Kidney (tissue), 22 donors: ENCODE measurements at regions of chr20 and their contacts with region 1.

Region 1: GRCh38 chr20:51372176-51372803 is 170.2 kb downstream of the NFATC2 start:
- DNase-seq: peak in 4 of 5 donors; percentile 78 to 84 (median 80)
- H3K4me3 ChIP-seq: no peak overlapping the region
- H3K27ac ChIP-seq: no peak overlapping the region
- H3K4me1 ChIP-seq: no peaks in the 10 kb centered on the region
- H3K27me3 ChIP-seq: no peaks in the 10 kb centered on the region
- CTCF ChIP-seq: peak; percentile 60

Region 2: GRCh38 chr20:51595058-51595532 is 222.8 kb after region 1 on chr20:
- intact Hi-C with region 1: loop called (anchors 10 kb)
- DNase-seq: peak; percentile 84 to 94 (median 89)
- H3K4me3 ChIP-seq: no peak overlapping the region
- H3K27ac ChIP-seq: peak overlapping the region in 1 of 2 donors; percentile 5
- H3K4me1 ChIP-seq: peaks cover 0 to 7% (median 0%) of the 10 kb centered on the region in 3 donors
- H3K27me3 ChIP-seq: no peaks in the 10 kb centered on the region
- CTCF ChIP-seq: peak; percentile 92